AG04449 (cell line): ENCODE measurements at regions of chr18 and their contacts with region 1.

Region 1: DNA sequence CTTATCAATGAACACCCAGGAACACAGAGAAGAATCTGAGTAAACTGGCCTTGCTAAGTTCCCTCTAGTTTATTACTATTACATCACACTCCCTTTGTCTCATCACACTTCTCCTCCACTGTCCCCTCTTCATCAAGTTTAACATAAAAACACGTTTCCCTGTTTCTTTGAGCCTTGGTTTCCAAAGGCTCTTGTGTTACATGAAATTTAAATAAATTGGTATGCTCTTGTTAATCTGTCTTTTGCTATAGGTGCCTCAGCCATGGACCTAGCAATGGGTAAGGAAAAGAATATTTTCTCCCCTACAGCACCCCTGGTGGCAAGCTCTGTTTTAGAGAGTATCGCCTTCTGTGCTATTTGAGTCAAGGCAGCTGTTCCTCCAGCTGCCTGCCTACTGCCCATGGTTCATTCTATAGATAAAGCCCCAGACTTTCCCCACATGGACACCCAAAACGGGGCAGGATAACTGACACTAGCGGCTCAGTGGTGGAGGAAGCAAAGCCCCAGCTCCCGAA is 31.8 kb downstream of the TGIF1 start:
- DNase-seq: no peak
- H3K4me3 ChIP-seq: no peak overlapping the region
- CTCF ChIP-seq: peak; percentile 45

Region 2: GRCh38 chr18:3454365-3455089 is 27.2 kb before region 1 on chr18:
- CTCF ChIA-PET with region 1: interaction called, 10 read pairs
- POLR2A ChIA-PET with region 1: no interaction called
- DNase-seq: no peak
- H3K4me3 ChIP-seq: peak overlapping the region; percentile 81
- CTCF ChIP-seq: peak; percentile 49

Region 3: DNA sequence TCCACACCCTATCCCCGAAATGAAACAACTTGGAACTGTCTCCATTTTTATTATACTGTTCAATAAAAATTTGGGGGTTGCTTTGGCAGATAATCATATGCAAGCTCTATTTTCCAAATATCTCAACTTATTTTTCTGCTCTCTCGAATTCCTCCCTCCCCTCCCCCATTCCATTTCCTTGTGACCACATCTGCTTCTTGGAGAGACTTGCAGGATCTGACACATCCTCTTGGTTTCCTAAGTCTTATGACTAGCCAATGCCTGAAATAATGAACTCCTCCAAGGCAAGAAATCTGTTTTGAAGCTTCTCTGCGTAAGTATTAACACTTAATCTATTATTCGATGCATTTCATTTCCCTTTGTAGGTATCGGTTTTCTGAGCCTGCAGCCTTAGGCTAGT is 15.7 kb before region 1 on chr18:
- CTCF ChIA-PET with region 1: interaction called, 10 read pairs
- POLR2A ChIA-PET with region 1: no interaction called
- DNase-seq: no peak
- H3K4me3 ChIP-seq: no peak overlapping the region
- CTCF ChIP-seq: no peak

Region 4: GRCh38 chr18:3623769-3624545 is 142.2 kb after region 1 on chr18:
- CTCF ChIA-PET with region 1: no interaction called
- POLR2A ChIA-PET with region 1: no interaction called
- DNase-seq: peak; percentile 95
- H3K4me3 ChIP-seq: peak overlapping the region; percentile 51
- CTCF ChIP-seq: no peak

Region 5: GRCh38 chr18:3679241-3679640 is 197.5 kb after region 1 on chr18:
- CTCF ChIA-PET with region 1: no interaction called
- POLR2A ChIA-PET with region 1: no interaction called
- DNase-seq: no peak
- H3K4me3 ChIP-seq: no peak overlapping the region
- CTCF ChIP-seq: no peak